Calu3 (cell line): ENCODE measurements at regions of chr2 and their contacts with region 1.

Region 1: GRCh38 chr2:203412546-203413331 is 84.5 kb downstream of the ABI2 start:
- DNase-seq: no peak
- H3K4me3 Mint-ChIP-seq: no peak overlapping the region
- H3K27ac Mint-ChIP-seq: no peak overlapping the region
- H3K4me1 Mint-ChIP-seq: peaks cover 9% of the 10 kb centered on the region
- H3K27me3 Mint-ChIP-seq: no peaks in the 10 kb centered on the region
- CTCF ChIP-seq: no peak

Region 2: DNA sequence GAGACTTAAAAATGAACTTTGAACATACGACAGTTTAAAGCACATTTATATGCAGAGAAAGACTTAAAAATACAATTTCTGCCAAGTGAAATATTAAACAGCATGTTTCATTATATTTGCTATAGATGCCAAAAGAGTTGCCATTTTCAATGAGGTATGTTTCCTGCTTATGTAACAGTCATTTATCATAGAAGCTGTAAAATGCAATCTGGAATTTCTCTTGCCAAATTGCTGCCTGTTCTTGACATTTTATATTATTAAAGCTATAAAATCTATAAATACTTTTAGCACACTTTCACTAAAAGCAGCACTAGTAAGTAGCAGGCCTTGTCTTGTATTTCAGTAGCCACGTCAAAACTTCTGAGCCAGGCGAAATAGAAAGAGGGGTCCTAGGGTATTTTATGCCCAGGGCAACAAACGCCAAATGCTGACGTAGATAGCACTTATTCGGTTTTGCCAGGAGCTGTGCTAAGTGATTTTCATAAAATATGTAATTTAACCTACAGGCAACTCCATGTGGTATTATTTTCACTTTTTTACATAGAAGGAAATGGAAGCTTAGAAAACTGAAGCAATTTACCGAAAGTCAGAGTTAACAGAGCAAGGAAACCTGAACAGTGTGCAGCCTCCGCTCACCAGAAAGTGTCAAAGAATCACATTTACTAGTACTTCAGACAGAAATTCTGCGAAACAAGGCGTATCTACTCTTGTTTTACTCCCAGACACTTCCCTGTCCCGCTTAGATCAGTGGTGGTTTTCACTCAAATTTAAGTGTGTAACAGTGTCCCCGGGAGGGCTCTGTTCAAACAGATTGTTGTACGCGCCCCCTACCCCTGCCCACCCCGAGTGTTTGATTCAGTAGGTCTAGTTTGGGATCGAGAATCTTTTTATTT is 175.1 kb before region 1 on chr2:
- CTCF ChIA-PET with region 1: no interaction called
- intact Hi-C with region 1: loop called (anchors 1 kb)
- DNase-seq: no peak
- H3K4me3 Mint-ChIP-seq: peak overlapping the region; percentile 88
- H3K27ac Mint-ChIP-seq: peak overlapping the region; percentile 92
- H3K4me1 Mint-ChIP-seq: peaks cover 16% of the 10 kb centered on the region
- H3K27me3 Mint-ChIP-seq: no peaks in the 10 kb centered on the region
- CTCF ChIP-seq: no peak

Region 3: GRCh38 chr2:203310688-203311448 is 101.9 kb before region 1 on chr2:
- CTCF ChIA-PET with region 1: no interaction called
- intact Hi-C with region 1: no loop called
- DNase-seq: no peak
- H3K4me3 Mint-ChIP-seq: no peak overlapping the region
- H3K27ac Mint-ChIP-seq: no peak overlapping the region
- H3K4me1 Mint-ChIP-seq: no peaks in the 10 kb centered on the region
- H3K27me3 Mint-ChIP-seq: no peaks in the 10 kb centered on the region
- CTCF ChIP-seq: no peak

Region 4: GRCh38 chr2:203340791-203341487 is 71.8 kb before region 1 on chr2:
- CTCF ChIA-PET with region 1: no interaction called
- intact Hi-C with region 1: no loop called
- DNase-seq: peak; percentile 32
- H3K4me3 Mint-ChIP-seq: no peak overlapping the region
- H3K27ac Mint-ChIP-seq: peak overlapping the region; percentile 8
- H3K4me1 Mint-ChIP-seq: peaks cover 19% of the 10 kb centered on the region
- H3K27me3 Mint-ChIP-seq: no peaks in the 10 kb centered on the region
- CTCF ChIP-seq: no peak